ENCODE measurements at regions of chr13 and their contacts with region 1.

Region 1: DNA sequence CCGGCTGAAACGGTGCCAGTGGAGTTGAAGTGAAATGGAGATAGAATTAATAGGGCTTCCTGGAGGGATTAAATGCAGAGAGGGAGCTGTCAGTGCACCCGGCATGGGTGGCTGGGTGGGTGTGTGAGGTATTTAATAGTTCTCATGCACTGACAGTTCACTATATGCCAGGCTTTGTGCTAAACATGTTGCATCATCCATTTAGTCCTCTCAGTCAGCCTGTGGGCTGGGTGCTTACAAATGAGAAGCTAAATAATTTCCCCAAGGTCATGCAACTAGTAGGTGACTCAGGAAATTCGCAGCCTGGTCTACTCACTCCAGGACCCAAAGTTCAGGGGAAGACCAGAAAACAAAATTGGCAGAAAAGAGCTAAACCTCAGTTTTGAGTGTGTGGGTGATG is 63.5 kb upstream of the SPATA13 start:
- DNase-seq: peak; percentile 7
- H3K4me3 Mint-ChIP-seq: peak overlapping the region; percentile 62
- H3K27ac Mint-ChIP-seq: peak overlapping the region; percentile 95
- H3K4me1 Mint-ChIP-seq: peaks cover 21% of the 10 kb centered on the region
- H3K27me3 Mint-ChIP-seq: peaks cover 15% of the 10 kb centered on the region

Region 2: DNA sequence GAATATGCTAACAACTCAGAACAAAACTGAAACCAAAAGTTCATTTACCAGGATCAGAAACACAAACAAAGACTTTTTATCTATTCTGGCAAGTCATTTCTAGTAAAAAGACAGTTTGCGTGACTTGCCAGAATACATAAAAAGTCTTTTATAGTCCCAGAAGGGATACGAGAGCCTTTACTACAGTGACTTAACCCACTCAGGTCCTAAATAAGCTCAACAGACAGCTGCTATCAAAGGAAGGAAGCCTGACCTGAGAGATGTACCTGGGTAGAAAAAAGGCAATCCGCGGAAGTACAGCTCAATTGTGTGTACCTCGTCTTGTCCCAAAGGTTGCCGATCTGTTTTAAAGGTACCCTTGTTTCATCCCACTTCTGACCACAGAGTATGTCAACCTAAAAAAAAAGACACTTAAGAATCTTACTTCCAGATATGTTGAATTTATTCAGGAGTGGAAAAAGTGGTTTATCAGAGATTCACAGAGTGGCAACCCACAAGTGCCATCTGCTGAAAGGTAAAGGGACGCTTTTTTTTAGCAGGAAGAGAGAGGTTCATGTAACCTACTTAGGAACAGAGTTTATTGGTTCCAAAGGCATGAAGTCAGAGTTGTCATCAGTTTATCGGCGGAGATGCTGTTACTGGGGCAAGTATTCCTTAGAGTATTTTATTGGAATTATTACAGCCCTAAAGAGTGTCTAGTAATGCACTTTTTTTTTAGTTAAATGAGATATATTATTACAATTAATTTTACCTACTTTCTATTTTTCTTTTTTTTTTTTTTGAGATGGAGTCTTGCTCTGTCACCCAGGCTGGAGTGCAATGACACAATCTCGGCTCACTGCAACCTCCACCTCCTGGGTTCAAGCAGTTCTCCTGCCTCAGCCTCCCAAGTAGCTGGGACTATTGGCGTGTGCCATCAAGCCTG is 130.1 kb before region 1 on chr13:
- intact Hi-C with region 1: loop called (anchors 1 kb)
- DNase-seq: peak; percentile 40
- H3K4me3 Mint-ChIP-seq: peak overlapping the region; percentile 77
- H3K27ac Mint-ChIP-seq: peak overlapping the region; percentile 86
- H3K4me1 Mint-ChIP-seq: peaks cover 47% of the 10 kb centered on the region
- H3K27me3 Mint-ChIP-seq: no peaks in the 10 kb centered on the region

Region 3: DNA sequence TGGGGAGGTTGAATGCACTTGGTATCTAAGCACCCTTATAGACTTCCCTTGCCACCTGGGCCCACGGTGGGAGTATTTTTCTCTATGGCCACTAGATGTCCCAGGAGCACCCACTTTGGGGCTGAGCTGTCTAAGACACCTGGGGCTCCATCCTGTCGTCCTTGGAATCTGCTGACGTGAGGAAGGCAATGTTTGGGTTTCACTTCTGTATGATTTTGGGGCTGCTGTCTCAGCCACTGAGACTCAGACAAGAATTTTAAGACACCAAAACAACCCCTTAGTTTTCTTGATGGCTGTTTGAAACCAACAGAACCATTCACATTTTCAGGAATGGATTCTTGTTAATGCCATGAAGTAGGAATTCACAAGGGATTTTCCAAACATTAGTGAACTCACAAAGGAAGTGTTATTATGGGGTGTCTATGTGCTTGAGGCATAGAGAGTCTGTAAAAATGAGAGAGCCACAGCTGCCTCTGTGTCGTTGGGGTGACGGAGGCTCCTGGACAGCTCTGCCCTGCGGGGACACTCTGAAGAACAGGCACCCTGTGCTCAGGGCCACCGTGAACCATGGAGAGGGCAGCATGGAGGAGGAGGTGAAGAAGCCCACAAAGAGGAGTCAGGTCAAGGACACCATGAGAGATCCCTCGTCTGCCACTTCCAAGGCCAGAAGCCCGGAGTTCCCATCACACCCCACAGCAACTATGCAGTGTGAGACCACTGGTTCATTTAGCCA is 43.4 kb before region 1 on chr13:
- intact Hi-C with region 1: loop called (anchors 2 kb)
- DNase-seq: peak; percentile 55
- H3K4me3 Mint-ChIP-seq: no peak overlapping the region
- H3K27ac Mint-ChIP-seq: no peak overlapping the region
- H3K4me1 Mint-ChIP-seq: peaks cover 20% of the 10 kb centered on the region
- H3K27me3 Mint-ChIP-seq: peaks cover 15% of the 10 kb centered on the region

Region 4: DNA sequence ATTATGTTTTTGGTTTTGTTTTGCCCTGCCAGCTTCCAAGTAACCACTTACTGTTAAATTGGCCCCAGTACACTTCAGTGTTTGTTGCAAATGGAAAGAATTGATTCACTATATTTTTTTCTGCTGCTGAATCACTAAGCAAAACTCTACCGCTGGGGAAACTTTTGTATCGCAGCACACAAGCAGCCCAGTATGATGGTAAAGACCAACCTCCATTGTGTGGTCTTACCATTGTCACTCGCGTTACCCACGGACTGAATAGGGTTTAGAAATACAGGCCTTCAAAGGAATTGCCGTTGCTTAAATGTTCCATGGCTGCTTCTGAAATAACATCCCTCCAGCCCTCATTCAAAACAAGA is 71.3 kb after region 1 on chr13:
- intact Hi-C with region 1: loop called (anchors 1 kb)
- DNase-seq: no peak
- H3K4me3 Mint-ChIP-seq: no peak overlapping the region
- H3K27ac Mint-ChIP-seq: peak overlapping the region; percentile 77
- H3K4me1 Mint-ChIP-seq: peaks cover 55% of the 10 kb centered on the region
- H3K27me3 Mint-ChIP-seq: peaks cover 4% of the 10 kb centered on the region

Region 5: DNA sequence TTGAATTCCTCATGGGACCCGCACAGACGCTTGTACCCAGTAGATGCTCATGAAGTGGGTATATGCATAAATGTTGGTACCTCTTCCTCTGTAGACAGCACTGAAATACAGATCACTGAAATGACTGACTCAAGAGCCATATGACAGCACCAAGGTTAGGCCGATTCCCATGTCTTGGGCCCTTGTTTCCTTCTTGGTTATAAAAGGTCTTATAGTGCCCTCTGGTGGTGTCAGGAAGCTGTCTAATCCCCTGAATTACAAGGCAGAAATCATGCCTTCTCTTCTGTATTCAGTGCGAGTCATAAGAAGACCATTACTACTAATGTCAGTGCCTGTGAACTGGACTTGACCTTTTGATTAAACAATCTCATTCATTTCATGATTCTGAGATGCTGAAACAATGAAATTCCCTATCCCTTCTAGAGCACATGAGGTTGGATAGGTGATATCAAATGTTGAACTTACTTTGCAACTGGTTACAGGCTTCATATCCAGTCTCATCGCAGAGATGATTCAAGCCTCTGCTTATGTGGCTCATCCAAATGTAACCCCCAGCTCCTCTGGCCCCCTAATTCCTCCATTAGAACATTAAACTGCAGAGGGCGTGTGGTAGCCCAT is 123.1 kb after region 1 on chr13:
- intact Hi-C with region 1: loop called (anchors 1 kb)
- DNase-seq: peak; percentile 55
- H3K4me3 Mint-ChIP-seq: no peak overlapping the region
- H3K27ac Mint-ChIP-seq: no peak overlapping the region
- H3K4me1 Mint-ChIP-seq: peaks cover 64% of the 10 kb centered on the region
- H3K27me3 Mint-ChIP-seq: no peaks in the 10 kb centered on the region

Region 6: GRCh38 chr13:24280720-24281119 is 183.7 kb after region 1 on chr13:
- intact Hi-C with region 1: no loop called
- DNase-seq: no peak
- H3K4me3 Mint-ChIP-seq: no peak overlapping the region
- H3K27ac Mint-ChIP-seq: no peak overlapping the region
- H3K4me1 Mint-ChIP-seq: peaks cover 48% of the 10 kb centered on the region
- H3K27me3 Mint-ChIP-seq: no peaks in the 10 kb centered on the region